ENCODE measurements at regions of chr1 and their contacts with region 1.

Region 1: DNA sequence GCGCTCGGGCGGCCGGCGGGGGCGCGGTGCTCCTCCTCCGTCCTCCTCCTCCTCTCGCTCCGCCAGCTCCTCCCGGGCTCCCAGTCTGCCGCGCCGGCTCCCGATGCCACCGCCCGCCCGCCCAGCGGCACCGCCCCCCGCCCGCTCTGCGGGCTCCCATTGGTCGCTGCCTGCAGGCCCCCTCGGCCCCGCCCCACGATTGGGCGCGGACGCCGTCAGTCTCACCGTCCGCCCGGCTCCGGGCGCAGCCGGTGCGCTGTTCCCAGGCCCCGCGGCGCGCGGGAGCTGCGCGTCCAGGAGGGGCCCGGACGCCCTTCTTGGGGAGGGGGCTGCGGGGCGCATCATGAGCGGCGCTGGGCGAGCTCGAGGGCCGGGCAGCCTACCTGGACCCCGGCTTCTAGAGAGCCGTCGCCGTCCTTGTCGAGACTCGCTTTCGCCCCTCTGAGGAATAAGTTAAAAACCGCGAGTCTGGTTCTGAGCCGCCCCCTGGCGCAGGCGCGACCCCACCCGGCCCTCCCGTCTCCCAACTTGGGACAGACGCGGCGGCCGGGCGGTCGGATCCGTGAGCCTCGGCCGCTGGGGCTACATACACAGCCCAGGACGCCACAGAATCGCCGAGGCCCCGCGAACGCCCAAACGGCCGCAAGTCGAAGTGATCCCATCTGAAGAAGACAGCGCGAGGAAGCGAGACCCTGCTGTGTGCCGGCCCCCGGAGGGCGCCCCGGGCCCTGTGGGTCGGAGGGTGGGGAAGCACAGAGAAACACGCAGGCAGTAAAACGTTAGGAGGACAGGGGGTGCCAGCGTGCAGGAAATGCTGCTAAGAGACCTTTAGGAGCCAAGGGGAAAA is at the start of gene SIPA1L2:
- DNase-seq: peak; percentile 96 to 98 (median 96)
- ATAC-seq: peak; percentile 92 to 98 (median 96)
- H3K4me3 ChIP-seq: peak within 1 kb of the TSS; percentile 68 to 96 (median 90)
- H3K27ac ChIP-seq: peak within 1 kb of the TSS; percentile 78 to 98 (median 94)
- H3K4me1 ChIP-seq: peaks cover 0 to 50% (median 25%) of the 10 kb centered on the region in 12 donors
- H3K27me3 ChIP-seq: no peaks in the 10 kb centered on the region
- CTCF ChIP-seq: peak in 10 of 12 donors; percentile 30 to 65 (median 52)
- POLR2A ChIP-seq: peak in 1 of 2 donors; percentile 94
- total RNA-seq, gene SIPA1L2: 70.8 to 148 (median 102) TPM

Region 2: DNA sequence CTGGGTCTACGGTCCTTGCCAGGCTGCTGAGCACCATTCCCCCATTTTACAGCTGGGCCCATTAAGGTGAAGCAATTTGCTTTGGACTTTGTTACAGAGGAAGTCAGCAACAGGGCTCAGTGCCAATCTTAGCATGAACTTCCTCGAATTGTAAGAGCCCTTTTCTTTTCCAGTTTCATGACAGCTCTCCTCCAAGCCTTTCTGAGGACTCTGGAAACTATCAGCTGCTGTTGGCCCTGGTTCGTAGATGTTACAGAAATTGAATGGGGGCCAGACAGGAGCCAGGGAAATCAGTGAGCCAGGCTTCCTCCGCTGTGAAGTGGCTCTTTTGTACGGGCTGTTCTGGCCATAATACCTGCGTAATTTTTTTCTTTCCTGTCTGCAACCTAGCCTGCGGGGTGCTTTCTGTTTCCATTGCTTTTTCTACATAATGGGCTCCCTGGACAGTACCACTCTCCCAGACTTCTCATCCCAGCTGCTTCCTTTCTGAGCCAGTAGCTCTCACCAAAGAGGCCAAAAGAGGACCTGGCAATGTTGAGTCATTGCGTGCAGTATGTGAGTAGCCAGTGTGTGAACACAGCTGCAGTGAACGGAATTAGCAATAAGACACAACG is 617.4 kb before region 1 on chr1:
- intact Hi-C with region 1: loop called in 1 of 10 experiments (anchors 10 kb)
- DNase-seq: peak in 4 of 5 donors; percentile 68 to 82 (median 70)
- ATAC-seq: peak; percentile 86 to 97 (median 94)
- H3K4me3 ChIP-seq: peak overlapping the region in 10 of 12 donors; percentile 1 to 38 (median 18)
- H3K27ac ChIP-seq: peak overlapping the region; percentile 53 to 74 (median 67)
- H3K4me1 ChIP-seq: peaks cover 0 to 38% (median 17%) of the 10 kb centered on the region in 12 donors
- H3K27me3 ChIP-seq: no peaks in the 10 kb centered on the region
- CTCF ChIP-seq: no peak
- POLR2A ChIP-seq: no peak

Region 3: DNA sequence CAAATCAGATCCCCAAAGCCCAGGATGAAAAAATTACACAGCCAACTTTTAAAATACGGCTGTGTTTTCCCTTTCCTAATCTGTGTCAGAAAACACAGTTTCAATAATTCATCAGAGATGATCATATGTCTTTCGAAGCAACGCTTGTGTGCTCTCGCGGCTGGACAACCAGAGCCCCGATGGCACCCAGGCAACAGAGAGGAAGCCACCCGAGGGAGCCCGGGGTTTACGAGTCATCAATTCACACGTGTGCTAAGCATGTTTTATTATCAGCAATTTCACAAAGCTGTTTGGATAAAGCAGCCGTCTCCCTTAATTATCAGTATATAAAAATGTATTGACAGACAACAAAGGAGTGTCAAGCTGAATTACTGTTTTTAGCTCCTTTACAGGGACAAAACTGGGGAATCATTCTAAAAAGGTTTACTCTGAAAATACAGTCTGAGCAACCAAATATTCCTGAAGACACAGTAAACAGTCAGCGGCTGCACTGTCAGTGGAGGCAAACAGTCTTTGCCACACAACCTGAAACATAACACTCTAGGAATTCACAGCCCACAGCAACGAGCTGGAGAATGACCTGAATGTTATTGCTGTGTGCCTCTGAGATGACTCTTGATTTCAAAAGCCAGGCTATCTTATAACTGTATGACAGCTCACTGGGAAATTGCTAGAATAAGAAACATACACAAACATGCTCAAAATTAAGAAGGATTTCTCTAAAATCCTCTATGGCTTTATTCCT is 201.3 kb before region 1 on chr1:
- intact Hi-C with region 1: loop called in 6 of 10 experiments (anchors 5 to 10 kb)
- DNase-seq: no peak
- ATAC-seq: peak in 3 of 4 donors; percentile 44 to 62 (median 48)
- H3K4me3 ChIP-seq: no peak overlapping the region
- H3K27ac ChIP-seq: peak overlapping the region in 8 of 12 donors; percentile 22 to 68 (median 39)
- H3K4me1 ChIP-seq: peaks cover 0 to 65% (median 26%) of the 10 kb centered on the region in 12 donors
- H3K27me3 ChIP-seq: no peaks in the 10 kb centered on the region
- CTCF ChIP-seq: no peak
- POLR2A ChIP-seq: no peak

Region 4: GRCh38 chr1:232493869-232494268 is 136.4 kb before region 1 on chr1:
- intact Hi-C with region 1: loop called in 3 of 10 experiments (anchors 10 kb)
- DNase-seq: no peak
- ATAC-seq: no peak
- H3K4me3 ChIP-seq: no peak overlapping the region
- H3K27ac ChIP-seq: no peak overlapping the region
- H3K4me1 ChIP-seq: peaks cover 0 to 31% (median 7%) of the 10 kb centered on the region in 12 donors
- H3K27me3 ChIP-seq: no peaks in the 10 kb centered on the region
- CTCF ChIP-seq: no peak
- POLR2A ChIP-seq: no peak

Region 5: GRCh38 chr1:232558954-232559353 is 71.3 kb before region 1 on chr1:
- intact Hi-C with region 1: loop called in 6 of 10 experiments (anchors 2 to 10 kb)
- DNase-seq: no peak
- ATAC-seq: no peak
- H3K4me3 ChIP-seq: no peak overlapping the region
- H3K27ac ChIP-seq: peak overlapping the region in 1 of 12 donors; percentile 5
- H3K4me1 ChIP-seq: peaks cover 6 to 95% (median 57%) of the 10 kb centered on the region in 12 donors
- H3K27me3 ChIP-seq: no peaks in the 10 kb centered on the region
- CTCF ChIP-seq: no peak
- POLR2A ChIP-seq: no peak

Region 6: DNA sequence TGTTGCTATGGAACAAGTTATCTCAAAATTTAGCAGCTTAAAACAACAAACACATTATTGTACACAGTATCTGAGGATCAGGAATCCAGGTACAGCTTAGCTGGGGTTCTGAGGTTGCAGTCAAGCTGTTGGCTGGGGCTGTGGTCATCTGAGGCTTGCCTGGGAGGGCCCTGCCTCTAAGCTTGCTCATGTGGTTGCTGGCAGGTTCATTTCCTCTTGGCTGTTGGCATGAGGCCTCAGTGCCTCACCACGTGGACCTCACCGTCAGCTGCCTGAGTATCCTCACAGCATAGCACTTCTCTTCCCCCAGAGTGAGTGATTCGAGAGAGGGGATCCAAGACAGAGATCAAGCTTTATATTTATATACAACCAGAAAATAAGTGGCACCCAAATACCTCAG is 338.7 kb after region 1 on chr1:
- intact Hi-C with region 1: loop called in 3 of 10 experiments (anchors 5 to 10 kb)
- DNase-seq: peak in 3 of 5 donors; percentile 51 to 79 (median 65)
- ATAC-seq: peak in 3 of 4 donors; percentile 83 to 89 (median 87)
- H3K4me3 ChIP-seq: no peak overlapping the region
- H3K27ac ChIP-seq: peak overlapping the region in 1 of 12 donors; percentile 2
- H3K4me1 ChIP-seq: peaks cover 0 to 49% (median 20%) of the 10 kb centered on the region in 12 donors
- H3K27me3 ChIP-seq: no peaks in the 10 kb centered on the region
- CTCF ChIP-seq: no peak
- POLR2A ChIP-seq: no peak

Measured in heart left ventricle (tissue), 16 donors.